ENCODE measurements at regions of chr21 and their contacts with region 1.

Region 1: GRCh38 chr21:23853796-23854379 is 1753.4 kb downstream of the MRPL39 start:
- DNase-seq: no peak
- ATAC-seq: peak; percentile 67
- H3K4me3 Mint-ChIP-seq: no peak overlapping the region
- H3K27ac Mint-ChIP-seq: no peak overlapping the region
- H3K4me1 Mint-ChIP-seq: peaks cover 15% of the 10 kb centered on the region
- H3K27me3 Mint-ChIP-seq: no peaks in the 10 kb centered on the region
- CTCF ChIP-seq: no peak

Region 2: DNA sequence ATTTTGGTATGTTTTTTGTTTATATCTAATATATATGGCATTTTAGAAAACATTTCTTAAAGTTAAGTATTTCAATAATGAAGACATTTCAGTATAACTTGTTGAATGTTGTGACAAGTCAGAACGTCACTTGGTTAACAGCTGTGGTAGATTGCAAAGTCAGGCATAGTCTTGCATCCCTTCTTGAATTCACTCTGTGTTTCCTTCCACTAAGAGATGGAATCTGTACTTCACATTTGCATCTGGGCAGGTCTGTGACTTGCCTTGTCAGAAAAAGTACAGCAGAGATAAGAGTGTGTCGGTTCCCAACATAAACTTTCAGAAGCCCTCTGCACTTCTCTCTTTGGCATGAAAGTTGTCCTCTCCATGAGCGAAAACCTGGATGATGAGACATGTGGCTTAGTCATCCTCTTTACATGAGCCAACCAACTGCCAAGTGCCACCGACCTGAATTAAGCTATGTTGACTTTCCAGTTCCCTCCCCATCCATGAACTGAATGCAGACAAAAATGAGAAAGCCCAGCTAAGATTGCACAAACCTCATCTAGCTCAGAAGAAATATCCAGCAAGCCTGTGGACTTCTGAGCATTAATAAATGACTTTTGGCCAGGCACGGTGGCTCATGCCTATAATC is 23.2 kb after region 1 on chr21:
- CTCF ChIA-PET with region 1: no interaction called
- POLR2A ChIA-PET with region 1: no interaction called
- intact Hi-C with region 1: no loop called
- DNase-seq: no peak
- ATAC-seq: no peak
- H3K4me3 Mint-ChIP-seq: no peak overlapping the region
- H3K27ac Mint-ChIP-seq: no peak overlapping the region
- H3K4me1 Mint-ChIP-seq: no peaks in the 10 kb centered on the region
- H3K27me3 Mint-ChIP-seq: no peaks in the 10 kb centered on the region
- CTCF ChIP-seq: no peak

Region 3: DNA sequence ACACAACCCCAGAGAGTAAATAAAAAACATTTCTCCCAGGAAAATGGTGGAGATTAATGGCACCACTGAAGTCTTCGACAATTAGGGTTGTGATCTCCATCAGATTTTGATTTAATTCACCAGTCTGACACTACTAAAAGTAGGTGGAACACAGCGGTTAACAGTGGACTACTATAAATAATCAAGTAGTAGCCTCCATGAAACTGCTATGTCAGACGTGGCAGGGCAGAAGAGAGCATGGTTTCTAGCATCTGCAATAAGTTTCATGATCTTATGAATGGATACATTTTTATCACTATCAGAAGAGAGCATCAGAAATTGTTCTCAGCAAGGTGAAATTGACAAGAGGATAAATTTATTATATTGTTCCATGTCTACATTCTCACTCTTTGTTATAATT is 46.8 kb after region 1 on chr21:
- CTCF ChIA-PET with region 1: no interaction called
- POLR2A ChIA-PET with region 1: no interaction called
- intact Hi-C with region 1: no loop called
- DNase-seq: no peak
- ATAC-seq: no peak
- H3K4me3 Mint-ChIP-seq: no peak overlapping the region
- H3K27ac Mint-ChIP-seq: no peak overlapping the region
- H3K4me1 Mint-ChIP-seq: no peaks in the 10 kb centered on the region
- H3K27me3 Mint-ChIP-seq: no peaks in the 10 kb centered on the region
- CTCF ChIP-seq: no peak

Region 4: DNA sequence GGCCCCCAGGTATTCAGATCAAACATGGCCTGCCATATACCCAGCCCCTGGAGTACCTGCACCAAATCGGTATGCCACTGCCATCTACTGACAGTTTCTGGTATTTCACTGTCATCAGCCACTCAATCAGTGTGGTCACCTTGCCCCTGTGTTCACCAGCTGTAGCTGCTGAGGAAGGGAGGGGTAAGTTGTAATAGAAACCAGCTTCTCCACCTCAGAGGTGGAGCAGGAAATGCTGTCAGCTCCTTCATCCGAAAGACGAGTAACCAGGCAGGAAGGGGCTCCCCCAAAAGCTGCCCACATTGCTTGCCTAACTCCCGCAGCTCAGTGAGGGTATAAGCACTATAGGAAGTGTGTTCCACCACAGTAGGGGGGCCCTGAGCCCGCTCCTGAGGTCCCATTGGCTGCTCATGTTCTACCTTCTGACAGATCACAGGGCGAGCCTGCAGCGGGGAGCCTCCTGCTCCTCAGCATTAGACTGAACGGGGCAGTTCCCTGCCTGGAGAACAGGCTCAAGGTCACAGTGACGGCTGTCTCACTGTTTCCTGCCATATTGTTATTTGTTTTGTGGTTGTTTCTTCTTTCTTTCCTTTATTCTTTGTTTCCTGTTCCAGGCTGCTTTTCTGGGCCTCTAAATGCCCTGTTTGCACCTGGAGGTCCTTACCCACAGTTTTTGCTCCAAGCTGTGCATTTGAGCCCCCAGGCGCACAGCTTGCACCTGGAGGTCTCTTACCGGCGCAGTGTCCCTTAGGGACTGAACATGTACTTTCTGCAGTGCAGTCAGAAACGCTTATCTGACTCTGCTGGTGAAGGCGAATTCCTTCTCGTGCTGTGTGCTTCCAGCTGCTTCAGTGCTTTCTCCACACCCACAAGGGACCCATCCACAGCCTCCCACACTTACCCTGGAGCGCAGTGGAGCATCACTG is 115.1 kb after region 1 on chr21:
- CTCF ChIA-PET with region 1: interaction called, 65 read pairs
- POLR2A ChIA-PET with region 1: interaction called, 3 read pairs
- intact Hi-C with region 1: loop called (anchors 1 kb)
- DNase-seq: peak; percentile 51
- ATAC-seq: peak; percentile 92
- H3K4me3 Mint-ChIP-seq: peak overlapping the region; percentile 76
- H3K27ac Mint-ChIP-seq: peak overlapping the region; percentile 81
- H3K4me1 Mint-ChIP-seq: peaks cover 18% of the 10 kb centered on the region
- H3K27me3 Mint-ChIP-seq: no peaks in the 10 kb centered on the region
- CTCF ChIP-seq: no peak

Region 5: DNA sequence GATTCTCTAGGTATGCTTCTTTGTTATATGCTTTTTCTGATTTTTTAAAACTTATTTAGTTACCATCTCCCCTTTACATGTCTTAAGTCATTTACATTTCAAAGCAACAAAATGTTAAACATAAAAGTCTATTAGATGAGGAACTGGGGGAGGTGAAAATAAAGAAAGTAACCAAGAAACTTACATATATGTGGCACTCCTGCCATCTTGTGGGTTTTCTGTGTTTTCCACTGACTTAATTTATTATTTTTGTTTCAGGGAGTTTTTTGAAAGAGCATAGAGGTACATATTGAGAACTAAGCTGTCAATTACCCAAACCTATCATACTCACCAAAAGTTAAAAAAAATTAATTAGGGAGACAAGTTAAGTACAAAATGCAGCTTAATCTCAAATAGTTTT is 222.3 kb after region 1 on chr21:
- CTCF ChIA-PET with region 1: interaction called, 5 read pairs
- POLR2A ChIA-PET with region 1: no interaction called
- intact Hi-C with region 1: loop called (anchors 1 kb)
- DNase-seq: no peak
- ATAC-seq: no peak
- H3K4me3 Mint-ChIP-seq: no peak overlapping the region
- H3K27ac Mint-ChIP-seq: no peak overlapping the region
- H3K4me1 Mint-ChIP-seq: peaks cover 17% of the 10 kb centered on the region
- H3K27me3 Mint-ChIP-seq: no peaks in the 10 kb centered on the region
- CTCF ChIP-seq: no peak

Region 6: DNA sequence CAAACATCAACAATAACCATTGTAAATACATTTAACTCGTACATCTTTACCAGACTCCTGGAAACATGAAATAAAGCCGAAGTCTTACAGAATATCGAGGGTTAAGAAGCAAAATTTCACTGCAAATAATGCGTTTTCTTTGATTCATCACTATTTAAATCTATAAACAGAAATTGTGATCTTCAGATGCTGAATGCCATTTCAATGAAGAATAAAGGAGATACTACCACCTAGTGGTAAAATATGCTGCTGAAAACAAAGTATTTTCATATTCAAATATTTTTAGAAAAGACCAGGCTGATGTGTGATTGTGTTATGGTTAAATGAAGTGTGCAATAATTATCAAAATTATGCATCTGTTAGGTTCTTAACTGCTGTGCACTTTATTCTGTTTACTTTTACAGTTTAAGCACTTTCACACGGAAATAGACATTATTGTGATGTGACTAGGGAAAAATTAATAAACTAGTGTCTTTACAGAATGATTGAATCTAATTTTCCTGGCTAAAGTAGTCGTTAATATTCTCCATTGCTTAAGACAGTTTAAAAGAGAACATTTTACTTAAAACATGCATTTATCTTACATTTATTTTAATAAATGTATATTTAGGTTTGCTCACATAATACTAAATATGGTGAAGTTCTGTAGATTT is 660.3 kb after region 1 on chr21:
- CTCF ChIA-PET with region 1: interaction called, 5 read pairs
- POLR2A ChIA-PET with region 1: no interaction called
- intact Hi-C with region 1: loop called (anchors 1 kb)
- DNase-seq: no peak
- ATAC-seq: no peak
- H3K4me3 Mint-ChIP-seq: no peak overlapping the region
- H3K27ac Mint-ChIP-seq: no peak overlapping the region
- H3K4me1 Mint-ChIP-seq: no peaks in the 10 kb centered on the region
- H3K27me3 Mint-ChIP-seq: no peaks in the 10 kb centered on the region
- CTCF ChIP-seq: no peak

Region 7: DNA sequence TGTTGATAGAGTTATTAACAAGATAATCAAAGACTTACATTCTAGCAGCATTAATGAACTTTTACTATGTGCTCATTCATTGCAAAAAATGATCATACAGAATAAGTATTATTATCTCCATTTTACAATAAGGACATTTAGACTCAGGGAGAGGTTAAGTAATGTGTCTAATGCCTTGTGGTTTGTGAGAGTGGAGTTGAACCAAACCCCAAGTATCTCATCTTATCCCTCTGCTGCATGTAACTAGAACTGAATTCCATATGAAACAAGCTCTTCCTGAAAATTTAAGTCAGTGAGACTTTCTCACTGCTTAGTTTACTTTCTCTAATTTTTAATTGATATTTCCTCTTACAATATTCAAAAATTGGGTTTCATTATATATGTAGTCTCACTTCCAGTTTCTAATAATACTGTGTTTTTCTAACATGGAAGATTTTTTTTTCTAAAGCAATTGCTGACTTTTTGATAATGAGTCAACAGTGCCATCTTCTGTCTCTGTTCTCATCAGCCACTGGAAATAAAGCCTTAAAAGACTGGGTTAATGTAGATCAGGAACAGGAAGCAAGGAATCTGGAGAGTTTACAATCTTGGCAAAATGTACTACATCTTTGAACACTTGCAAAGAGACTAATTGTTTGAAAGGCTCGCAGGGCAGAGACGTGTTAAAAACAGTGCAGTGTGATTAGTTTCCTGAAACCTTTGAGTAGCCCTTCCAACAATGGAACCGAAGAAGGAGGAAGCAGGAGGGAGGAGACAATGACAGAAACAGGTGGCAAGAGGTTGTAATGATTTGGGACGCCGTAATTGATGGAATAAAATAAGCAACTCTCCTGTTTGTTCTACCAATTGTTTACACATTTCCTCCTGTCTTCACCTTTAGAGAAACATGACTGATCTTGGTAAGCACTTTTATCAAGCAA is 1185.8 kb after region 1 on chr21:
- CTCF ChIA-PET with region 1: no interaction called
- POLR2A ChIA-PET with region 1: no interaction called
- intact Hi-C with region 1: loop called (anchors 1 kb)
- DNase-seq: no peak
- ATAC-seq: peak; percentile 64
- H3K4me3 Mint-ChIP-seq: peak overlapping the region; percentile 74
- H3K27ac Mint-ChIP-seq: peak overlapping the region; percentile 80
- H3K4me1 Mint-ChIP-seq: peaks cover 35% of the 10 kb centered on the region
- H3K27me3 Mint-ChIP-seq: no peaks in the 10 kb centered on the region
- CTCF ChIP-seq: no peak